Body of pancreas (tissue), 4 donors: ENCODE measurements at regions of chr22 and their contacts with region 1.

Region 1: GRCh38 chr22:34105461-34106062 is 185.3 kb upstream of the LARGE1 start:
- DNase-seq: peak; percentile 60 to 76 (median 64)
- ATAC-seq: peak; percentile 53
- H3K4me3 ChIP-seq: no peak overlapping the region
- H3K27ac ChIP-seq: no peak overlapping the region
- H3K4me1 ChIP-seq: no peaks in the 10 kb centered on the region
- H3K27me3 ChIP-seq: peaks cover 0 to 9% of the 10 kb centered on the region in 2 donors
- CTCF ChIP-seq: peak; percentile 48 to 73 (median 56)
- POLR2A ChIP-seq: no peak

Region 2: DNA sequence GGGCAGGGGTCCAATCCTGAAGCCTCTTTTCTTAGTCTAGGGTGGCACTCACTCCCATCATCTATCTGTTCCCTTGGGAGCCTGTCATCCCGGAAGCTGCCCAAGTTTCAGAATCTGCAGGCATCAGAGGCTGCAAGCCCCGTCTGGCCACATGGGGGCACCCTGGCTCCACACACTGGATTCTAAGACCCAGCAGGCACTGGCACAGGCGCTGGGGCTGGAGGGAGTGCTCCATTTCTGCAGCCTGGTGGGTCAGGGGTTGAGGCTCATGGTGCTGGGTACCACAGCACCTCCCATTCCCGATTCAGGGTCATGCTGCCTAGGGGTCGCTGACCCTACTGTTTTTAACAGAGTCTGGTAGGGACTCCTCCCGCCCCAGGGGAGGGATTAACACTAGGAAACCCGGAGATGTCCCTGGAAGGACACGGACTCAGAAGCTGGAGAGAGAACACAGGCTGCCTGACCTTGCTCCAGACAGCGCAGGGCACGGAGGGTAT is 803.5 kb before region 1 on chr22:
- intact Hi-C with region 1: loop called (anchors 10 kb)
- DNase-seq: peak; percentile 78 to 87 (median 80)
- ATAC-seq: peak; percentile 82
- H3K4me3 ChIP-seq: no peak overlapping the region
- H3K27ac ChIP-seq: no peak overlapping the region
- H3K4me1 ChIP-seq: peaks cover 17% of the 10 kb centered on the region
- H3K27me3 ChIP-seq: no peaks in the 10 kb centered on the region
- CTCF ChIP-seq: peak; percentile 82 to 93 (median 89)
- POLR2A ChIP-seq: no peak

Region 3: GRCh38 chr22:33920927-33921524 is 184.5 kb before region 1 on chr22:
- intact Hi-C with region 1: loop called (anchors 10 kb)
- DNase-seq: peak; percentile 98 to 99 (median 98)
- ATAC-seq: peak; percentile 91
- H3K4me3 ChIP-seq: peak overlapping the region; percentile 19 to 49
- H3K27ac ChIP-seq: peak overlapping the region in 3 of 4 donors; percentile 43 to 67 (median 48)
- H3K4me1 ChIP-seq: peaks cover 32% of the 10 kb centered on the region
- H3K27me3 ChIP-seq: no peaks in the 10 kb centered on the region
- CTCF ChIP-seq: no peak
- POLR2A ChIP-seq: peak; percentile 39 to 72 (median 57)